H1 (cell line): ENCODE measurements at regions of chr10 and their contacts with region 1.

Region 1: GRCh38 chr10:94443047-94443446 is 40.7 kb downstream of the TBC1D12 start:
- DNase-seq: no peak
- H3K4me3 ChIP-seq: no peak overlapping the region
- H3K27ac ChIP-seq: no peak overlapping the region
- H3K4me1 ChIP-seq: no peaks in the 10 kb centered on the region
- H3K27me3 ChIP-seq: no peaks in the 10 kb centered on the region
- CTCF ChIP-seq: no peak
- EP300 ChIP-seq: no peak
- POLR2A ChIP-seq: no peak
- RAD21 ChIP-seq: no peak

Region 2: DNA sequence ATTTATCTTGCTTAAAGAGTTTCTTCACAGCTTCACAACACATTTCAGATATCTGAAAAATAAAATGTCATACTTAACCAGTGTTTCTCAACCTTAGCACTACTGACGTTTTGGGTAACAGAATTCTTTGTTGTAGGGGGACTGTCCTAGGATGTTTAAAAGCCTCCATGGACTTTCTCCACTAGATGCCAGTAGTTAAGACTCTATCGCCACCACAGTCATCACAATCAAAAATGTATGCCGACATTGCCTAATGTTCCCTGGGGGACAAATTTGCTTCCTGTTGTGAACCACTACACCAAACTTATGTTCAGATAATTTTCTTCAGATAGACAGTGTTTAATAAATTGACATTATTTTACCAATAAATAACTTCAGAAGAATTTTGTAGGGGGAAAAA is 93.7 kb before region 1 on chr10:
- CTCF ChIA-PET with region 1: interaction called, 14 read pairs
- POLR2A ChIA-PET with region 1: no interaction called
- DNase-seq: no peak
- H3K4me3 ChIP-seq: no peak overlapping the region
- H3K27ac ChIP-seq: no peak overlapping the region
- H3K4me1 ChIP-seq: no peaks in the 10 kb centered on the region
- H3K27me3 ChIP-seq: peaks cover 0 to 1% (median 0%) of the 10 kb centered on the region in 4 experiments; a peak in 1 of 7 replicates
- CTCF ChIP-seq: no peak
- EP300 ChIP-seq: no peak
- POLR2A ChIP-seq: no peak
- RAD21 ChIP-seq: no peak

Region 3: DNA sequence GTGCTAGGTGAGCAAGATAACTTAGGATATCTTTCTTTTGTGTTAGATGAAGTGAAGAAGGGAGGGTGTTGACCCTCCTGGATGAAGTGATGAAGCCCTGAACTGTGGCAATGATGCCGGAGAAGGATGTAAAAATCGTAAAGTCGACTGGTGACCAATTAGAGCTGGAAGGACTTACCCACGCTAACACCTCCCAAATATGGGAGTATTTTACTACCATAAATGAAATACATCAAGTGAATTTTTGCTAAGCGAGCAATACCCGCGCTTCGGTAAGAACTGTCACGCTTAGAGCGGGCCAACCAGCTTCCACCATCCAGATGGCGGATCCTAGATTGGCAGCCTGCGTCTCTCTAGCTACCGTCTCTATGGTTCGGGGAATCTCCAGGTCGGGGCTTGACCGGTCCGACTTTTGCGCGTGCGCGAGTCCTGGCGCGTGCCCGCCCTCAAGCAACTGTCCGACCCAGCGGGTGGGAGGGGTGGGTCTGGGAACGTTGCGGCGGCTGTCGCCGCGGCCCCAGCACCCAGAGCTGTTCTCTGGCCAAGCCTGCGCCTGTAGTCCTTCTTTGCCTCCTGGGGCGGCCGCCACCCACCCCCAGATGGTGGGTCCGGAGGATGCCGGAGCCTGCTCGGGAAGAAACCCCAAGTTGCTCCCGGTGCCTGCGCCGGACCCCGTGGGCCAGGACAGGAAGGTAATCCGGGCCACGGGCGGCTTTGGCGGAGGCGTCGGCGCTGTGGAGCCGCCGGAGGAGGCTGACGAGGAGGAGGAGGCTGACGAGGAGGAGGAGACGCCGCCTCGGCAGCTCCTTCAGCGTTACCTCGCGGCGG is 40.8 kb before region 1 on chr10 and contains the start of gene TBC1D12:
- CTCF ChIA-PET with region 1: interaction called, 10 read pairs
- POLR2A ChIA-PET with region 1: no interaction called
- DNase-seq: peak; percentile 88 to 93
- H3K4me3 ChIP-seq: peak within 1 kb of the TSS; percentile 58 to 89 (median 66)
- H3K27ac ChIP-seq: no peak within 1 kb of the TSS
- H3K4me1 ChIP-seq: peaks cover 0 to 4% (median 2%) of the 10 kb centered on the region in 4 experiments; a peak in 2 of 7 replicates
- H3K27me3 ChIP-seq: peaks cover 1 to 24% (median 16%) of the 10 kb centered on the region in 4 experiments
- CTCF ChIP-seq: no peak
- EP300 ChIP-seq: no peak
- POLR2A ChIP-seq: no peak
- RAD21 ChIP-seq: no peak
- total RNA-seq, gene TBC1D12: 3.2 and 3.6 TPM in 2 replicates

Region 4: GRCh38 chr10:94432443-94432842 is 10.6 kb before region 1 on chr10:
- CTCF ChIA-PET with region 1: interaction called, 19 read pairs
- POLR2A ChIA-PET with region 1: no interaction called
- DNase-seq: no peak
- H3K4me3 ChIP-seq: no peak overlapping the region
- H3K27ac ChIP-seq: no peak overlapping the region
- H3K4me1 ChIP-seq: no peaks in the 10 kb centered on the region
- H3K27me3 ChIP-seq: no peaks in the 10 kb centered on the region
- CTCF ChIP-seq: no peak
- EP300 ChIP-seq: no peak
- POLR2A ChIP-seq: no peak
- RAD21 ChIP-seq: no peak